H1 (cell line): ENCODE measurements at regions of chr3 and their contacts with region 1.

Region 1: GRCh38 chr3:98657457-98657856 is 64.0 kb upstream of the CPOX start:
- DNase-seq: peak; percentile 21 to 72
- H3K4me3 ChIP-seq: peak overlapping the region in 3 of 4 experiments; percentile 24 to 34 (median 29); a peak in 3 of 8 replicates
- H3K27ac ChIP-seq: no peak overlapping the region
- H3K4me1 ChIP-seq: no peaks in the 10 kb centered on the region
- H3K27me3 ChIP-seq: no peaks in the 10 kb centered on the region; a peak in 2 of 7 replicates
- CTCF ChIP-seq: peak; percentile 75 to 89 (median 88)
- EP300 ChIP-seq: no peak
- POLR2A ChIP-seq: no peak
- RAD21 ChIP-seq: peak; percentile 74 to 85

Region 2: GRCh38 chr3:98522244-98523090 is 135.0 kb before region 1 on chr3 and contains the start of gene CLDND1:
- CTCF ChIA-PET with region 1: no interaction called
- POLR2A ChIA-PET with region 1: no interaction called
- DNase-seq: peak; percentile 90 to 91
- H3K4me3 ChIP-seq: peak within 1 kb of the TSS; percentile 73 to 98 (median 88)
- H3K27ac ChIP-seq: peak within 1 kb of the TSS; percentile 88
- H3K4me1 ChIP-seq: peaks cover 0 to 3% (median 1%) of the 10 kb centered on the region in 4 experiments; a peak in 2 of 7 replicates
- H3K27me3 ChIP-seq: no peaks in the 10 kb centered on the region
- CTCF ChIP-seq: no peak; a peak in 1 of 4 replicates
- EP300 ChIP-seq: 0 out of 3 replicates have a peak, but pooled peaks of 1 of the 2 experiments have one; percentile 10
- POLR2A ChIP-seq: peak; percentile 75 to 91
- RAD21 ChIP-seq: no peak
- total RNA-seq, gene CLDND1: 68.2 and 69.1 TPM in 2 replicates

Region 3: GRCh38 chr3:98596541-98597500 is 60.6 kb before region 1 on chr3:
- CTCF ChIA-PET with region 1: interaction called, 53 read pairs
- POLR2A ChIA-PET with region 1: no interaction called
- DNase-seq: no peak
- H3K4me3 ChIP-seq: no peak overlapping the region
- H3K27ac ChIP-seq: no peak overlapping the region
- H3K4me1 ChIP-seq: peaks cover 0 to 5% (median 3%) of the 10 kb centered on the region in 4 experiments; a peak in 2 of 7 replicates
- H3K27me3 ChIP-seq: peaks cover 0 to 1% (median 0%) of the 10 kb centered on the region in 4 experiments; a peak in 2 of 7 replicates
- CTCF ChIP-seq: peak in 2 of 3 experiments; percentile 8 to 20; a peak in 2 of 4 replicates
- EP300 ChIP-seq: no peak
- POLR2A ChIP-seq: no peak
- RAD21 ChIP-seq: no peak

Region 4: DNA sequence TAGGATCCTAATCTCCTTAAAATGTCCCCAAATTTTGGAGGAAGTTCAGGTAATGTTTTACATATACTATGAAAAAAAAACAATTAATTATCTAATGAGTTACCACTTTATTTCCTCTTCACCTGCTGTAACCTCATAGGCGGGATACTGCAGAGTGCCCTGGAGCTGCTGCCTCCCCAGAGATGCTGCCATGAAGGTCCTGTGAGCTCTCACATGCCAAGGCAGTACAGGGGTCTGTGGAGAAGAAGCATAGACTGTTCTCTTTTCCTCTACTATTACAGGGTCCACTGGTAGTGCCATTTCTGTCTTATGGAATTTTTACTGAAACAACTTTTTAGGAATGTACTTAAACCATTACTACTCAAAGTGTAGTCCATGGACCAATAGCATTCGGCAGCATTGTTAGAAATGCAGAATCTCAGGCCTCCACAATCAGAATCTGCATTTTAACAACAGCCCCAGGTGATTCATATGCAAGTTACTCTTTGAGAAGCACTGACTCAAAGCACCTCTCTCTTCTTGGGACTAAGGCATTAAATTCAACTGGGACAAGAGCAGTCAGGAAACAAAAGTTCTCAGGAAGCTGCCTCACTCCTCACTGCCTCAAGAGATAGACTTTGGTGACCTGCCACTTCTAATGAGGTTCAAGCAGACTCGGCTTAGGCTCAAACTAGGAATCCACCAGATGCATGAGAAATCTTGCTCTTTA is 33.7 kb before region 1 on chr3:
- CTCF ChIA-PET with region 1: interaction called, 11 read pairs
- POLR2A ChIA-PET with region 1: no interaction called
- DNase-seq: no peak
- H3K4me3 ChIP-seq: peak overlapping the region in 1 of 4 experiments; percentile 9; a peak in 1 of 8 replicates
- H3K27ac ChIP-seq: no peak overlapping the region
- H3K4me1 ChIP-seq: peaks cover 0 to 14% (median 7%) of the 10 kb centered on the region in 4 experiments; a peak in 2 of 7 replicates
- H3K27me3 ChIP-seq: no peaks in the 10 kb centered on the region
- CTCF ChIP-seq: no peak
- EP300 ChIP-seq: no peak
- POLR2A ChIP-seq: no peak
- RAD21 ChIP-seq: no peak

Region 5: GRCh38 chr3:98670020-98670419 is 12.6 kb after region 1 on chr3:
- CTCF ChIA-PET with region 1: interaction called, 23 read pairs
- POLR2A ChIA-PET with region 1: interaction called, 3 read pairs
- DNase-seq: no peak
- H3K4me3 ChIP-seq: no peak overlapping the region
- H3K27ac ChIP-seq: no peak overlapping the region
- H3K4me1 ChIP-seq: no peaks in the 10 kb centered on the region
- H3K27me3 ChIP-seq: no peaks in the 10 kb centered on the region
- CTCF ChIP-seq: no peak
- EP300 ChIP-seq: no peak
- POLR2A ChIP-seq: no peak
- RAD21 ChIP-seq: no peak